HepG2 (cell line): ENCODE measurements at regions of chr12 and their contacts with region 1.

Region 1: DNA sequence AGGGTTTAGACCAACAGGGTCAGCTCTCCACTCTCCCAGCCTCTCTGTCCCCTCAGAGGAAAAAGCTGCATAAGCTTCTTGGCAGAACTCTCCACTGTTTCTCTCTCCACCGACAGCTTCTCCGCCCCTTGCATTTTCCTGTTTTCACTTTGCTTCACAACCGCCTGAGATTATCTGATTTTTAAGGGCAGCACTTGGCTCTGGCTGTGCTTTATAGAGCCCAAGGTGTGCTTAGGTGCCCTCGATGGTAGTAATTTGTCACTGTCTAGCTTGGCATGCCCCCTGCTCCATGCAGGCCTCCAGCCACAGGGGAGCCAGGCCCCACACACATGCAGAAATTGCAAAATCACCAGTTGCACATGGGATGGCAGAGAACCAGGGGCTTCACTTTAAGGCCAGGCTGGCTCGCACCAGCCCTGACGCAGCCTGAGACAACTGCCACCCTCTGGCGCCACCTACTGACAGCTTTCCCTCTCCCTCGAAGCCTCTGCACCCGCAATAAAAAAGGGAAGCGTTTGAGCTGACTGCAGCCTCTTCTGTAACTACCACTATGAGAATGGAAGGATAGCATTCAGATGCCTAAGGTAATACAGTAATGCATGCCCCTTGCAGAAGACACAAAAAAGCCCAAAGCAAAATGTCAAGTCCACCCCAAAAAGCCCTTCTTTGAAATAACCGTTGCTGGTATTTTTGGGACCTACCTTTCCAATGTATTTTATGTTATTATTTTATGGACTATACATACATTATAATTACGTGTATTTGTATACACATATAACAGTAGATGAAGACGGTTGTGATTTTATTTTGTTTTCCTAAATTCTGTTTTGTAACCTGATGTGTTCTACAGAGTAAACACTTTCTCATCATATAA is 32.0 kb upstream of the RIMBP2 start:
- DNase-seq: peak; percentile 40
- ATAC-seq: peak; percentile 97
- H3K4me3 ChIP-seq: no peak overlapping the region
- H3K27ac ChIP-seq: no peak overlapping the region
- H3K4me1 ChIP-seq: no peaks in the 10 kb centered on the region
- H3K27me3 ChIP-seq: peaks cover 0 to 8% of the 10 kb centered on the region in 2 experiments; a peak in 1 of 5 replicates
- CTCF ChIP-seq: peak; percentile 93
- EP300 ChIP-seq: no peak
- POLR2A ChIP-seq: no peak
- RAD21 ChIP-seq: peak; percentile 86

Region 2: GRCh38 chr12:130031571-130032189 is 716.4 kb before region 1 on chr12:
- CTCF ChIA-PET with region 1: no interaction called
- POLR2A ChIA-PET with region 1: no interaction called
- in situ Hi-C with region 1: loop called (anchors 25 kb)
- intact Hi-C with region 1: no loop called
- DNase-seq: peak; percentile 60
- ATAC-seq: peak; percentile 97
- H3K4me3 ChIP-seq: no peak overlapping the region
- H3K27ac ChIP-seq: no peak overlapping the region
- H3K4me1 ChIP-seq: no peaks in the 10 kb centered on the region
- H3K27me3 ChIP-seq: peaks cover 1 to 25% of the 10 kb centered on the region in 2 experiments; a peak in 2 of 5 replicates
- CTCF ChIP-seq: peak; percentile 81
- EP300 ChIP-seq: no peak
- POLR2A ChIP-seq: no peak
- RAD21 ChIP-seq: no peak

Region 3: GRCh38 chr12:130041983-130042812 is 705.9 kb before region 1 on chr12:
- CTCF ChIA-PET with region 1: no interaction called
- POLR2A ChIA-PET with region 1: no interaction called
- in situ Hi-C with region 1: loop called (anchors 25 kb)
- intact Hi-C with region 1: loop called (anchors 10 kb)
- DNase-seq: no peak
- ATAC-seq: peak; percentile 23; the same call in 2 of the 3 replicates
- H3K4me3 ChIP-seq: no peak overlapping the region
- H3K27ac ChIP-seq: no peak overlapping the region
- H3K4me1 ChIP-seq: peaks cover 34% of the 10 kb centered on the region
- H3K27me3 ChIP-seq: peaks cover 0 to 5% of the 10 kb centered on the region in 2 experiments; a peak in 3 of 5 replicates
- CTCF ChIP-seq: peak; percentile 75
- EP300 ChIP-seq: no peak
- POLR2A ChIP-seq: no peak
- RAD21 ChIP-seq: no peak

Region 4: DNA sequence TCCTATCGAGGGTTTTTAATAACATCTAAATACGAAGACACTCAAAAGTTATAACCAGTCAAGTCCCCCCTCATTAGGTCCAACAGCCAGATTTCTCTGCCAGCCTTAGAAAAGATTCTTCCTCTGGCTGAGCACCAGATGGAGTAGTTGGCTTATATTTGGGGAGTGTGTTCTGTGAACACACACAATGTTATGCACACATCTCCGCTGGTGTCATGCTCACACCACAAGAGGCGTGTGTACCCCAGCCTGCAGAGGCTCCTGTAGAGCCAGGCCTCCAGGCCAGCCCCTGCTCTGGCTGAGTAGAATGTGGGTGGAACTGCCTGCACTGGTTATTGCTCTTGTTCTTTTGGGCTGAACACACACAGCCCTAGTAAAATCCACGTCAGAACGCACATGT is 346.4 kb before region 1 on chr12:
- CTCF ChIA-PET with region 1: interaction called, 4 read pairs
- POLR2A ChIA-PET with region 1: no interaction called
- in situ Hi-C with region 1: loop called (anchors 5 kb)
- intact Hi-C with region 1: no loop called
- DNase-seq: peak; percentile 12
- ATAC-seq: peak; percentile 77
- H3K4me3 ChIP-seq: no peak overlapping the region
- H3K27ac ChIP-seq: no peak overlapping the region
- H3K4me1 ChIP-seq: no peaks in the 10 kb centered on the region
- H3K27me3 ChIP-seq: peaks cover 0 to 18% of the 10 kb centered on the region in 2 experiments; a peak in 3 of 5 replicates
- CTCF ChIP-seq: peak; percentile 53
- EP300 ChIP-seq: no peak
- POLR2A ChIP-seq: no peak
- RAD21 ChIP-seq: 0 out of 2 replicates have a peak, but pooled peaks have one; percentile 32

Region 5: GRCh38 chr12:130460611-130461478 is 287.3 kb before region 1 on chr12:
- CTCF ChIA-PET with region 1: no interaction called
- POLR2A ChIA-PET with region 1: no interaction called
- in situ Hi-C with region 1: no loop called
- intact Hi-C with region 1: loop called (anchors 10 kb)
- DNase-seq: no peak
- ATAC-seq: no peak
- H3K4me3 ChIP-seq: no peak overlapping the region
- H3K27ac ChIP-seq: no peak overlapping the region
- H3K4me1 ChIP-seq: no peaks in the 10 kb centered on the region
- H3K27me3 ChIP-seq: peaks cover 8 to 32% of the 10 kb centered on the region in 2 experiments; a peak in 4 of 5 replicates
- CTCF ChIP-seq: no peak
- EP300 ChIP-seq: no peak
- POLR2A ChIP-seq: no peak
- RAD21 ChIP-seq: no peak

Region 6: DNA sequence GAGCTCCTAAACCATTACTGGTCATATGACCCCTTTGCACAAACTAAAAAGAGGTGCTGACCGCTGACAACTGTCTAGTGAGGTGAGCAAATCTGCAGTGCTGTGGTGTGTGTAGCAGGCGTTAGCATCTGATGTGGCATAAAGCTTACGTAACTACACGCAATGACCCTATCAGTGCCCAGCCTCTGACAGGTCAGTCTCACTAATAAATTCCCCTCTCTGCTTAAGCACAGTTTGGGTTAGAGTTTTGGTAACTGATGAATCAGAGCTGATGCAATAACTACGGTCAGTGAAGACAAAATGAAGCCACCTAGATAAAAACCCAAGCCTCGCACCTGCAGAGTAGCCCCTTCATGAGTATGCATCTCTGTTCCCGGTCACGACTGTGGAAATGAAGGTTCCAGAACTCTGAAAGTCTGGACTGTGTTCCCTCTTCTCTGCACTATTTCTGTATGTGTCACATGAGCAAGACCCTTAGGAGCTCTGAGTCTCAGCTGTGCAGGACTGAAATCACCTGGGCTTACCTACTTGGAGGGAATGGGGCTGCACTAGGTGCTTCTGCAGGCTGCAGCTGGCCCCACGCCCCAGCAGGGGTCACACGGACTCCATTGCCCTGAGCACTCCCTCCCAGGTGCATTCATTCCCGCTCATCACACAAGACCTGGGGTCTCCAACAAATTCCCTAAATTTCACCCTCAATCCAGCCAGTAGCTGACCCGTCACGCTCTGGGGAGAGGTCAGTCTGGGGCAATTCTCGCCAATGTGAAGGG is 86.4 kb before region 1 on chr12:
- CTCF ChIA-PET with region 1: no interaction called
- POLR2A ChIA-PET with region 1: no interaction called
- in situ Hi-C with region 1: no loop called
- intact Hi-C with region 1: loop called (anchors 5 kb)
- DNase-seq: peak; percentile 7
- ATAC-seq: peak; percentile 81
- H3K4me3 ChIP-seq: no peak overlapping the region
- H3K27ac ChIP-seq: no peak overlapping the region
- H3K4me1 ChIP-seq: no peaks in the 10 kb centered on the region
- H3K27me3 ChIP-seq: peaks cover 3 to 13% of the 10 kb centered on the region in 2 experiments; a peak in 3 of 5 replicates
- CTCF ChIP-seq: peak; percentile 52
- EP300 ChIP-seq: no peak
- POLR2A ChIP-seq: no peak
- RAD21 ChIP-seq: no peak

Region 7: DNA sequence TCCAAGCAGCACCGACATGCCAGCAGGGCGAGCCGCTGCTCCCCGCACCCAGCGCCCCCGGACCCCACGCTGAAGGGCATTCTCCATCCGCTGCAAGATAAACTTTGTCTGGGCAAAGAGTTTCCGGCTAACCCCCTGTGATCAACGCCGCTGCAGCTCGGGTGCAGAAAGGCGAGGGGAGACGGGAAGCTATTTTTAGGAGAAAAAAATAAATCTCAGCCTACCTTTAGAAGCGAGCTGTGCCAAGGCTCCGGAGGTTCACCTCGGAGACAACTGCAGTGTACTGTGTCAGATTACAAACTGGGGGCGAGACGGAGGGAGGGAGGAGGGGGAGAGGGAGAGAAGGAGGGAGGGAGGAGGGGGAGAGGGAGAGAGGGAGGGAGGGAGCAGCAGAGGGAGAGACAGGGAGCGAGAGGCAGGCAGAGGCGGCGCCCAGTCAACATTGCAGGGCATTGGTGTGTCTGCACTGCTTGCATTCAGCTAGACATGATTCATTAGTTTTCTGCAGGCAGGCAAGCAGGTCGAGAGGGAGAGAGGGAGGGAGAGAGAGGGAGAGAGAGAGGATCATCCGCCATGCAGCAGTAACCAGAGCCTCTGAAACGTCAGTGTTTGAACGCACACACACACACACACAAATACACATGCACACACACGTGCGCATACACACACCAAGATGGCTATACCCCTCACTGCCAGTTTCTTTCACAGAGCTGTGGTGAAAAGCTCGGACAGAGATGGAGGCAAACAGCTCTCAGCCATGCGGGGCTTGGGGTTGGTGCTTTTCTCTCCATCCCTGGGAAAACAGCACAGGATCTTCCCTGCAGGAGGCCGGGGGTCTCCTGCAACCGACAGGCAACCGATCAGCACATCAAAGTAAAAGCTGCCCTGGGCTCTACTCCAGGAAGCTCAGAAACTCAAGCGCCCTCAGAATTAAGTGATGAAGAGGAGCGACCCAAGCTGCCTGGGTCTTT is 31.8 kb before region 1 on chr12 and contains the start of gene RIMBP2:
- CTCF ChIA-PET with region 1: no interaction called
- POLR2A ChIA-PET with region 1: no interaction called
- in situ Hi-C with region 1: no loop called
- intact Hi-C with region 1: no loop called
- DNase-seq: no peak
- ATAC-seq: no peak
- H3K4me3 ChIP-seq: no peak within 1 kb of the TSS
- H3K27ac ChIP-seq: no peak within 1 kb of the TSS
- H3K4me1 ChIP-seq: no peaks in the 10 kb centered on the region
- H3K27me3 ChIP-seq: peaks cover 7 to 70% of the 10 kb centered on the region in 2 experiments; a peak in 4 of 5 replicates
- CTCF ChIP-seq: no peak
- EP300 ChIP-seq: no peak
- POLR2A ChIP-seq: no peak
- RAD21 ChIP-seq: no peak
- total RNA-seq, gene RIMBP2: not detected in 2 replicates